PC-9 (cell line): ENCODE measurements at regions of chr3 and their contacts with region 1.

Region 1: GRCh38 chr3:64533617-64534317 is 154.0 kb downstream of the ADAMTS9 start:
- DNase-seq: peak; percentile 57 to 80
- H3K4me3 ChIP-seq: no peak overlapping the region
- H3K27ac ChIP-seq: no peak overlapping the region
- H3K4me1 ChIP-seq: no peaks in the 10 kb centered on the region
- H3K27me3 ChIP-seq: no peaks in the 10 kb centered on the region
- CTCF ChIP-seq: peak; percentile 77

Region 2: GRCh38 chr3:64685800-64686445 is 152.2 kb after region 1 on chr3:
- CTCF ChIA-PET with region 1: no interaction called
- POLR2A ChIA-PET with region 1: no interaction called
- intact Hi-C with region 1: loop called (anchors 1 kb)
- DNase-seq: peak; percentile 81 to 94
- H3K4me3 ChIP-seq: peak overlapping the region; percentile 90
- H3K27ac ChIP-seq: peak overlapping the region; percentile 90
- H3K4me1 ChIP-seq: peaks cover 13% of the 10 kb centered on the region; the same call in 1 of the 2 replicates
- H3K27me3 ChIP-seq: no peaks in the 10 kb centered on the region
- CTCF ChIP-seq: no peak

Region 3: DNA sequence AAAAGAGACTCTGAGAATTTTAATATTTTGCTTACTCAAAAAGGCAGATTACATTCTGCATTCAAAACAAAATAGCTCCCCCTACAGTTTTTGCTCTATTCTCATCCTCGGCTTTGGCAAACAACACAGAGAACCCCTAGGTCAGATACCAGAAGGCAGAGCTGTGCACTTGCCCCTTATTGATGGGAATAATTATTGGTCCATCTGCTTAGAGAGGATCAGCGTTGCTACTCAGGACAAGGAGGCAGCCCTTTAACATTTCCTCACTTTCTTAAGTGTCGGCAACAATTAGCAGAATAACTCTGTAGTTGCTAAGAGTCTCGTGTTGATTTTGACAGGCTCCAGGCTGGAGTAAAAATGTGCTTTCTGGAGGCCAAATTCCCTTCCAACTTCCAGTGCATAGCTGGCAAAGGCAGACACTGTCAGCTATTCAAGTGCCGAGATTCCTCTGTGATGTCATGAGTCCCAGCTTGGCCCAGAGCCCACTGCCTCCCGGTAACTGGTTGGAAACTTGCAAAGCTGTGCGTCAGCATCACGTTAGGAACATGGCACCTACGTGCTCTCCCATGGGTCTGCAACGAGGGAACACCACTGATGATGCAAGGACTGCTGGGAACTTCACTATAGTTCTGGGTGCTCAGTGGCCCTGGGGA is 636.7 kb after region 1 on chr3:
- CTCF ChIA-PET with region 1: interaction called, 3 read pairs
- POLR2A ChIA-PET with region 1: no interaction called
- intact Hi-C with region 1: loop called (anchors 5 kb)
- DNase-seq: no peak
- H3K4me3 ChIP-seq: no peak overlapping the region
- H3K27ac ChIP-seq: no peak overlapping the region
- H3K4me1 ChIP-seq: no peaks in the 10 kb centered on the region
- H3K27me3 ChIP-seq: no peaks in the 10 kb centered on the region
- CTCF ChIP-seq: peak; percentile 52

Region 4: DNA sequence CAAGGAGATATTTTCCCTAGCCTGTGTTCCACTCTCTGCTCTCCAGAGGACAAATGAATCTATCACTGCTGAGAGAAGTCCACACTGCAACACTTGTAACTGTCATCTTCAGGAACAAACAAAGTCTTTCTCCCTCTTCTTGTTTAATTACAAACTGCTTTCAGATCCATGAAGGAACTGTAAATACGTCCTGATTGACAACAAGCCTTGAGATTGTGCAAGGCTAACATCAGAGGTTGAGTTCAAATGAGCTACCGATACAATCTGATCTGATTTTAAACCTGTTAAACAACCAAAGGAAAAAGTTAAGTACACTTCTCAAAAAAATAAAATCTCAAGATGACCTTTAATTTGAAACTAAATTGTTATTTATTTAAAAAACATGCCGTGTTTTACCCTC is 792.8 kb after region 1 on chr3:
- CTCF ChIA-PET with region 1: no interaction called
- POLR2A ChIA-PET with region 1: no interaction called
- intact Hi-C with region 1: loop called (anchors 5 kb)
- DNase-seq: no peak
- H3K4me3 ChIP-seq: no peak overlapping the region
- H3K27ac ChIP-seq: no peak overlapping the region
- H3K4me1 ChIP-seq: no peaks in the 10 kb centered on the region
- H3K27me3 ChIP-seq: no peaks in the 10 kb centered on the region
- CTCF ChIP-seq: no peak

Region 5: DNA sequence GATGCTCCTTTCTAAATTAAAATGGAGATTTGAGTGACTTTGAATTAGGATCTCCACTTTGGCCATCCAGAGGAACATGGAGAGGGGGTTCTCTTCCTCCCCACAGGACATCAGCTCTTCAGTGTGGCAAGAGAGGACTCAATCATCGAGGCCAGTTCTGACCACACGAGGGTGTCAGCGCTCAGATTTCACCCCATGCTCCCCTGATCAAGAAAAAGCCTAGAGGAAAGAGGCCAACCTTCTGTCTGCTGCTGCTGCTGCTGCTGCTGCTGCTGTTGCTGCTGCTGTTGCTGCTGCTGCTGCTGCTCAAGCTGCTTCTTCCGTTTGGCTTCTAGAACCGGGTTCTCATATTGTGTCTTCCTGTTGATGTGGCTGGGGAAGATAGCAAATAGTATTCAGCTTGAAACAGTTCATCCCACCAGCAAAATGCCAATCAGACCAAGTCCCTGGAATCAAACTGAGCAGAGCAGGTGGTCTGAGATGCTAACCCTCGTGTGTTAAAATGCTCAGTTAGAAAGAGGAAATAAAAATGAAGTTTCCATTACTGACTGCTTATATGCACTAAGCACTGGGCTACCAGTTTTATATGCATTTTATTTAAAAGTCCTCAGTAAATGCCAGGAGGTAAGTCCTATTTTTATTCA is 906.0 kb after region 1 on chr3:
- CTCF ChIA-PET with region 1: interaction called, 3 read pairs
- POLR2A ChIA-PET with region 1: no interaction called
- intact Hi-C with region 1: loop called (anchors 1 kb)
- DNase-seq: peak; percentile 37 to 46
- H3K4me3 ChIP-seq: no peak overlapping the region
- H3K27ac ChIP-seq: no peak overlapping the region
- H3K4me1 ChIP-seq: no peaks in the 10 kb centered on the region
- H3K27me3 ChIP-seq: no peaks in the 10 kb centered on the region
- CTCF ChIP-seq: peak; percentile 59

Region 6: GRCh38 chr3:65732051-65732935 is 1198.5 kb after region 1 on chr3:
- CTCF ChIA-PET with region 1: no interaction called
- POLR2A ChIA-PET with region 1: no interaction called
- intact Hi-C with region 1: loop called (anchors 10 kb)
- DNase-seq: peak; percentile 16 to 40
- H3K4me3 ChIP-seq: no peak overlapping the region
- H3K27ac ChIP-seq: no peak overlapping the region
- H3K4me1 ChIP-seq: no peaks in the 10 kb centered on the region
- H3K27me3 ChIP-seq: no peaks in the 10 kb centered on the region
- CTCF ChIP-seq: peak; percentile 73

Region 7: GRCh38 chr3:66236281-66236680 is 1702.5 kb after region 1 on chr3:
- CTCF ChIA-PET with region 1: interaction called, 15 read pairs
- POLR2A ChIA-PET with region 1: no interaction called
- intact Hi-C with region 1: no loop called
- DNase-seq: no peak
- H3K4me3 ChIP-seq: no peak overlapping the region
- H3K27ac ChIP-seq: no peak overlapping the region
- H3K4me1 ChIP-seq: no peaks in the 10 kb centered on the region
- H3K27me3 ChIP-seq: no peaks in the 10 kb centered on the region
- CTCF ChIP-seq: no peak